ENCODE measurements at regions of chr3 and their contacts with region 1.

Region 1: DNA sequence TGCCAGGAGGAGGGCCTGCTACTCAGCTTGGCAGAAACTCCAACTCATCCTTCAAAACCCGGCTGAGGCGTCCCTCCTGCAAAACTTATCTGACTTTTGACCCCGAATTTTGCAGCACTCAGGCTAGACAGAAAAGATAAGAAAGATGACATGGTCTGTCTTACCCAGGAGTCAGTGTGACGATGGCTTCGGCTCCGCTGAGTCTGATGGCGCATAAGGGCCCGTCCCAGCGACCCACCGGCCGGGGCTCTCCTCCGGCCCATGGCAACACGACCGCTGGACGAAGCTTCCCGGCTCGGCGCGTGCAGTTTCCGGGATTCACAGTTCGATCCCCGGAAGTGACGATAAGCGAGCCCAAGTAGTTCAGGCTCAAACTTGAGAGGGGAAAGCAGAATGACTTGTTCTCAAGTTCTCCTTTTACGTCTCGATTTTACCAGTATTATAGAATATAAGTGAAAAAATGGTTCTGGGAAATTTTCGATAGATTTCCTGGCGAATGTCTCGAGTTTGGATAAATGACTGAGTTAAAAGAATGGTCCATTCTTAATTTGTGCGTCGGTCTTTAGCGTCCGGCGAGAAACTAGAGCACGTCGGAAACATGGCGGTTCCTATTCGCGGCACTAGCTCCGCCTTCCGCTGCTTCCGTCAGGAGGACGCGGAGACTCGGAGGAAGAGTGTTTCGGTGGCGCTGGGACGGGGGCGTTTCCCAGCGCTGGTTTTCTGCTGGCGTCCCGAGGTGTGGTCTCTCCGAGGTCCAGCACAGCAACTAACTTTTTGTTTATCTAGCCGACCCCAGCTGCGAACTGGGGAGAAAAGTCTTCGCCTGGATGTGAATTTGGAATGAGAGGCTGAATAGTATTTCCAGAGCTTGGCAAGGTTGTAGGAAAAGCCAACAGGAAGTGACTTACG is at the start of gene LSG1:
- DNase-seq: peak; percentile 88
- CTCF ChIP-seq: no peak

Region 2: DNA sequence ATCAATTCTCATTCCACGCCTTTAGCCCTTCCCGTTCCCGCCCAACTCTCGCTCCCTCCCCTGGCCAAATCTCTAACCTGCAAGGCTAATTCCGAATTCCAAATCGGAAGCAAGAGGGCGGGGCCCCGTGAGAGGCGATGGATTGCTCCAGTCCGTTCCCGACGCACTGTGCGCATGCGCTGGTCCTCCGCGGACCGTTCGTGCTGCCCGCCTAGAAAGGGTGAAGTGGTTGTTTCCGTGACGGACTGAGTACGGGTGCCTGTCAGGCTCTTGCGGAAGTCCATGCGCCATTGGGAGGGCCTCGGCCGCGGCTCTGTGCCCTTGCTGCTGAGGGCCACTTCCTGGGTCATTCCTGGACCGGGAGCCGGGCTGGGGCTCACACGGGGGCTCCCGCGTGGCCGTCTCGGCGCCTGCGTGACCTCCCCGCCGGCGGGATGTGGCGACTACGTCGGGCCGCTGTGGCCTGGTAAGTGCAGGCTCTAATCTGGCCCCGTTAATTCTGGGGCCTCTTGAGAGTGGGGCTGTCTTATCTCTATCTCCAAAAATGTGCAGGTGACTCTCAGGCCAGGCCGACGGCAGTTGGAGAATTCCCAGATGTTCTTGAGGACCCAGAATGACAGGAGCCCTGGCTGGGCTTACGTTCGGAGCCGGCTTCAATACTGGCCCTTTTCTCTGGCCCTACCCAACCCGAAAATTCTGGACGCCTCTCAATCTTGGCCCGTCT is 1079.0 kb before region 1 on chr3 and contains the start of gene OPA1:
- CTCF ChIA-PET with region 1: no interaction called
- POLR2A ChIA-PET with region 1: no interaction called
- DNase-seq: peak; percentile 97
- CTCF ChIP-seq: no peak

Region 3: DNA sequence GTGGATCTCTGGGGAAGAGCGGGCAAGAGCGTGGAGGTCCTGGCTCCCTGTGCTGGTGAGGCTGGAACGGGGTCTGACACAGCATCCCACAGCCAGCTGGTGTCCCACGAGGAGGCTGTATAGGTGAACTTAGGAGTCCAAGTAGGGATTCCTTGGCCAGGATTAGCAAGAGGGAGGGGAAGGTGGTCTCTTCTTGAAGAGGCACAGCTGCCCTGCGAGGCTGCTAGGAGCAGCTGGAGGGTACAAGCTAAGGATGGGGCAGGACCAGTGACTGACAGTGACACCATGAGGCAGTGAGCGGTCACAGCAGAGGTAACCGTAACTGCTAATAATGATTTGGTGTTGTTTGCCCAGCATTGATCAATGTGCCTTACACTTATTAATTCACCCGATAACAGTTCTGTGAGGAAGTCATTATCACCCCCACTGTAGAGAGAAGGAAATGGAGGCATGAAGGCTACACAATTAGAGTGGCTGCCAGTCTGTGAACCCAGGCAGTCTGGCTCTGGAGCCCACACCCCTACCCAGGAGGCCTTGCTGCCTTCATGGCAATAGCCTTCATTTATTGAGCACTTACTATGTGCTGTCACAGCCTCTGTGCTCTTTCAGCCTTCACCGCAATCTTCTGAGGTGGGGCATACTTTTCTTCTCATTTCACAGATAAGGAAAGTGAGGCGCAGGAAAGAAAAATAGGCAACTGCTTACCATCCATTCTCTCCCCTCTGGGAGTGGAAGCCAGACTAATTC is 98.3 kb before region 1 on chr3:
- CTCF ChIA-PET with region 1: no interaction called
- POLR2A ChIA-PET with region 1: no interaction called
- DNase-seq: peak; percentile 86
- CTCF ChIP-seq: peak; percentile 89

Region 4: DNA sequence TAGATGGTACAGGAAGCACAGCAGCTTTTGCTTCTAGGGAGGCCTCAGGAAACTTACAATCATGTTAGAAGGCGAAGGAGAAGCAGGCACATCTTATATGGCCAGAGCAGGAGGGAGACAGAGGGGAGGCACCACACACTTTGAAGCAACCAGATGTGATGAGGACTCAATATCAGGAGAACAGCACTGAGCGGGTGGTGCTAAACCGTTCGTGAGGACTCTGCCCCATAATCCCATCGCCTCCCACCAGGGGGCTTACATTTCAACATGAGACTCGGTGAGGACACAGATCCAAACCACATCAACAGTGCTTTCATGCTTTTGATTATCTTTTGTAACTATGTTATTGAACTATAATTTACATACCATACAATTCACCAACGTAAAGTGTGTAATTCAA is 31.3 kb before region 1 on chr3:
- CTCF ChIA-PET with region 1: interaction called, 13 read pairs
- POLR2A ChIA-PET with region 1: no interaction called
- DNase-seq: no peak
- CTCF ChIP-seq: no peak

Region 5: GRCh38 chr3:194654443-194654842 is 17.7 kb before region 1 on chr3:
- CTCF ChIA-PET with region 1: interaction called, 59 read pairs
- POLR2A ChIA-PET with region 1: no interaction called
- DNase-seq: peak; percentile 53
- CTCF ChIP-seq: no peak

Region 6: GRCh38 chr3:194682694-194683310 is 10.6 kb after region 1 on chr3:
- CTCF ChIA-PET with region 1: interaction called, 107 read pairs
- POLR2A ChIA-PET with region 1: interaction called, 22 read pairs
- DNase-seq: peak; percentile 82
- CTCF ChIP-seq: peak; percentile 76

Region 7: GRCh38 chr3:195259475-195260279 is 587.5 kb after region 1 on chr3:
- CTCF ChIA-PET with region 1: interaction called, 28 read pairs
- POLR2A ChIA-PET with region 1: no interaction called
- DNase-seq: peak; percentile 95
- CTCF ChIP-seq: peak; percentile 97